A673 (cell line): ENCODE measurements at regions of chrX and their contacts with region 1.

Region 1: GRCh38 chrX:30488092-30488491 is 89.5 kb downstream of the TASL start:
- DNase-seq: peak; percentile 66
- H3K4me3 ChIP-seq: no peak overlapping the region
- H3K27ac ChIP-seq: no peak overlapping the region
- H3K4me1 ChIP-seq: peaks cover 4% of the 10 kb centered on the region
- H3K27me3 ChIP-seq: no peaks in the 10 kb centered on the region
- CTCF ChIP-seq: peak; percentile 57

Region 2: DNA sequence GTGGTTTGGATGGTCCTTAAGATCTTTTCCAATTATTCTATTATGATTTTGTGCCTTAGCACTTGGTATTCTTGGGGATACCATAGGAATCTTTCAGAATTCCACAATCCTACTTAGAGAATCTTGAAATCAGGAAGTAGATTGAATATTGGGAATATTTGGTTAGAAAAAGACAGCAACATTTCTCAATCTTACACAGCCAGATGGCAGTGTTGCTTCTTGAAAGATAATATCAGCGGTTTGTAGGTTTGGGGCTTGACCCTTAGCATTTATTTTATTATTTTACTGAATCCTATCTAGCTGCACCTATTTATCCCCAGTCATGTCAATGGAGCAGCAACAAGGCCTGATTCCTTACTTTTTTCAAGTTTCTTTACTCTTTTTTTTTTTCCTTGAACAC is 212.6 kb before region 1 on chrX:
- CTCF ChIA-PET with region 1: no interaction called
- POLR2A ChIA-PET with region 1: no interaction called
- intact Hi-C with region 1: loop called (anchors 5 kb)
- DNase-seq: peak; percentile 38
- H3K4me3 ChIP-seq: no peak overlapping the region
- H3K27ac ChIP-seq: no peak overlapping the region
- H3K4me1 ChIP-seq: no peaks in the 10 kb centered on the region
- H3K27me3 ChIP-seq: no peaks in the 10 kb centered on the region
- CTCF ChIP-seq: peak; percentile 60

Region 3: DNA sequence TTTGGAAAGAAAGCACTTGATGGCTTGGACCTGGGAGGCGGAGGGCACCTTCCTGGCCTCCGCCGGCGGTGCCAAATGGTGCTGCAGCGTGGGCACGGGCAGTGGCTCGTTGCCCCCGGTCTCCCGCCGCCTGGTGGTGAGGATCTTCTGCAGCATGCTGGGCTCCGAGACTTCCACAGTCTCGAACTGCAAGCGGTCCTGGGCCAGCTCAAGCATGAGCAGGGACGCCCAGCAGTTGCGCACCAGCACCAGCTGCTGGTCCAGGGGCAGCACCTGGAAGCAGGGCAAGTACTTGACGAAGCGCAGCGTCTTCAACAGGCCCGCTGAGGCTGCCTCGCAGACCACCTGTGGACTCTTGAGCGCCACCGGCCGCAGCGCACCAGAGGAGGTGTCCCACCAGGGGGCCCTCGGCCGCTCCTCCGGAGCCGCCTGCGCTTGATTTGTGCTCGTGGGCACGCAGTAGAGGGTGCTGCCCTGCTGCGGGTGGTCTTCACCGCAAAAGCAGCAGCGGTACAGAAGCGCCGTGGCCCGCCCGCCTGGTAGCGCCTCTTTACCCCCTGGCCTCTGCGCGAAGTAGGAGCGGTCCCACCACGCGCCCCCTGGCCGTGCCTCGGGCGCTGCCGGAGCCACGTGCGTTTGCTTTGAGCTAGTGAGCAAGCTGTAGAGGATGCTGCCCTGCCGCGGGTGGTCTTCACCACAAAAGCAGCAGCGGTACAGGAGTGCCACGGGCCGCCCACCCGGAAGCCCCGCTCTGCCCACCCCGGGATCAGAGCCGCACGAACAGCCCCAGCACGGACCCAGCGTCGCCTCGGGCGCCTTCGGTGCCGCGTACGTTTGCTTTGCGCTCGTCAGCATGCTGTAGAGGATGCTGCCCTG is 179.6 kb before region 1 on chrX:
- CTCF ChIA-PET with region 1: no interaction called
- POLR2A ChIA-PET with region 1: no interaction called
- intact Hi-C with region 1: loop called (anchors 2 kb)
- DNase-seq: peak; percentile 79
- H3K4me3 ChIP-seq: peak overlapping the region; percentile 70
- H3K27ac ChIP-seq: peak overlapping the region; percentile 82
- H3K4me1 ChIP-seq: peaks cover 18% of the 10 kb centered on the region
- H3K27me3 ChIP-seq: no peaks in the 10 kb centered on the region
- CTCF ChIP-seq: peak; percentile 72